ENCODE measurements at regions of chr11 and their contacts with region 1.

Region 1: GRCh38 chr11:108467091-108467823 is at the start of gene C11orf65:
- DNase-seq: peak; percentile 97
- ATAC-seq: peak; percentile 98
- H3K4me3 Mint-ChIP-seq: peak within 1 kb of the TSS; percentile 99
- H3K27ac Mint-ChIP-seq: peak within 1 kb of the TSS; percentile 98
- H3K4me1 Mint-ChIP-seq: peaks cover 12% of the 10 kb centered on the region
- H3K27me3 Mint-ChIP-seq: no peaks in the 10 kb centered on the region
- total RNA-seq, gene C11orf65: 3.4 to 3.6 TPM

Region 2: DNA sequence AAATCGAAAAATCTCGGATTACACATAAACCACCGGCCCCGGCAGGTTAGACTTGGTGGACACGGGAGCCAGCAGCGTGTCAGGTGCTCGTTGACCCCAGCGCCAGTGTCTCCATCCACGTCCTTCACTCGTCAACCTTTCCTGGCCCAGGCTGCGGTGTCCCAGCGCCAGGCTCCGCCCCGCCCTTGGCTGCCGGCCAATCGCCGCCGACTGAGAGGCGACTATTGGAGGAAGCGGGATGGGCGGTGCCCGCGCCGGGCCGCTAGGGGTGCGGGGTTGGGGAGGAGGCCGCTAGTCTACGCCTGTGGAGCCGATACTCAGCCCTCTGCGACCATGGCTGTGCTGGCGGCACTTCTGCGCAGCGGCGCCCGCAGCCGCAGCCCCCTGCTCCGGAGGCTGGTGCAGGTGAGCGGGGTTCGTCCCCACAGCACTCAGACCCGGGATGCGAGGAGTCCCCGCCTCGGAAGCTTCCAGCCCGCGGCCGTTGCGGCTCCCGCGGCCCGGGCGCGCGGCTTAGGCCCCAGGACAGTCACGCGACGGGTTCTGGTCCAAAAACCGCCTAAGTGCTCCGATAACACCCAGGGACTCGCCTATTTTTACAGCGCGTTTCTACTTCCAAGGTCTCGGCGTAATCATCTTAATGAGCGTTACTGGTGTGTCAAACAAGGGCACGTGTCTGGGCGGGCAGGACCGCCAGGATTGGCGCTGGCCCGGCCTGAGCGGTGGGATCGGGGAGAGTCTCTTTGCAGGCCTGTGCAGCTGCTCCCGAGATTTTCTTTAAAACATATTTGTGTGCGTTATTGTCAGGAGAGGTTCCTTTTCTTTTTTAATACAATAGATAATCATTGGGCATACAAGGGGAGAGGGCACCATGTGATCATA is 345.7 kb before region 1 on chr11 and contains the start of gene ACAT1:
- CTCF ChIA-PET with region 1: no interaction called
- POLR2A ChIA-PET with region 1: no interaction called
- intact Hi-C with region 1: loop called (anchors 1 to 2 kb)
- DNase-seq: peak; percentile 98
- ATAC-seq: peak; percentile 96
- H3K4me3 Mint-ChIP-seq: peak within 1 kb of the TSS; percentile 87
- H3K27ac Mint-ChIP-seq: peak within 1 kb of the TSS; percentile 85
- H3K4me1 Mint-ChIP-seq: peaks cover 40% of the 10 kb centered on the region
- H3K27me3 Mint-ChIP-seq: no peaks in the 10 kb centered on the region
- total RNA-seq, gene ACAT1: 59.0 to 67.0 TPM

Region 3: GRCh38 chr11:108237058-108237481 is 230.2 kb before region 1 on chr11:
- CTCF ChIA-PET with region 1: no interaction called
- POLR2A ChIA-PET with region 1: no interaction called
- intact Hi-C with region 1: loop called in 1 of 2 experiments (anchors 1 kb)
- DNase-seq: no peak
- ATAC-seq: peak; percentile 47
- H3K4me3 Mint-ChIP-seq: peak overlapping the region; percentile 57
- H3K27ac Mint-ChIP-seq: peak overlapping the region; percentile 83
- H3K4me1 Mint-ChIP-seq: peaks cover 77% of the 10 kb centered on the region
- H3K27me3 Mint-ChIP-seq: no peaks in the 10 kb centered on the region

Region 4: DNA sequence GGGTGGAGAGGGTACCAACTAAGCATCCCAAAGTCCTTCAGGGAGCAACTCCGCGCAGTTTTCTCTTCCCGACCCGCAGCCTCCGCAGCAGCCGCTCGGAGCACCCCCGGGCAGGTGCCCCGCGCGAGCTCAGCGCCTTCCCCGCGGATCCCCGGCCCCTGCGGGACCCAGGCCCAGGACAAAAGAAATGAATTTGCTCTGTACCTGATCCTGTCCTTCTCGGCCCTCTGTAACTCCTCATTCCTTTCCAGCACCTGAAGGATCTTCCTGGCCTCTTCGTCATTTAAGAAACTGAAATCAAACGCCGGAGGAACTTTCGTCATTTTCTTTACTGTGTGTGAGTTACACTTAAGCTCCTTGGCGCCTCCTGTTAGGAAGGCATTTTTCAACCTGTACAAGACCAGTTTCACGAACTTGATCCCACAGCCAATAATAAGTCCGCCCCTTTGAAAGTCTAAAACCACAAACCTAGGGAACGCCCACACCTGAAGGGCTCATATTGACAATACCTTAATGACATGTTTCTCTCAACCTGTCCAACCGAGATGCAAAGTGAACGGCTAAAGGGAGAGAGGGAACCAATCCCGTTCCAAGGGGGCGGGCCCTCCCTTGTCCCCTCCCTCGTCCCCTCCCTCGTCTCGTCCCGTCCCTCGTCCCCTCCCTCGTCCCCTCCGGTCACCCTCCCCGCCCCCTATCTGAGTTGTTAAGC is 126.1 kb after region 1 on chr11 and contains the start of gene EXPH5:
- CTCF ChIA-PET with region 1: no interaction called
- POLR2A ChIA-PET with region 1: no interaction called
- intact Hi-C with region 1: loop called (anchors 1 kb)
- DNase-seq: peak; percentile 92
- ATAC-seq: peak; percentile 99
- H3K4me3 Mint-ChIP-seq: peak within 1 kb of the TSS; percentile 94
- H3K27ac Mint-ChIP-seq: peak within 1 kb of the TSS; percentile 98
- H3K4me1 Mint-ChIP-seq: peaks cover 15% of the 10 kb centered on the region
- H3K27me3 Mint-ChIP-seq: peaks cover 21% of the 10 kb centered on the region
- total RNA-seq, gene EXPH5: 2.0 to 2.4 TPM

Region 5: GRCh38 chr11:108664730-108665525 is 197.7 kb after region 1 on chr11 and contains the start of gene DDX10:
- CTCF ChIA-PET with region 1: no interaction called
- POLR2A ChIA-PET with region 1: no interaction called
- intact Hi-C with region 1: loop called (anchors 1 kb)
- DNase-seq: peak; percentile 99
- ATAC-seq: peak; percentile 99
- H3K4me3 Mint-ChIP-seq: peak within 1 kb of the TSS; percentile 99
- H3K27ac Mint-ChIP-seq: peak within 1 kb of the TSS; percentile 91
- H3K4me1 Mint-ChIP-seq: peaks cover 37% of the 10 kb centered on the region
- H3K27me3 Mint-ChIP-seq: no peaks in the 10 kb centered on the region
- total RNA-seq, gene DDX10: 45.8 to 50.9 TPM

Region 6: GRCh38 chr11:108697872-108698473 is 230.7 kb after region 1 on chr11:
- CTCF ChIA-PET with region 1: no interaction called
- POLR2A ChIA-PET with region 1: no interaction called
- intact Hi-C with region 1: no loop called
- DNase-seq: peak; percentile 66
- ATAC-seq: peak; percentile 73
- H3K4me3 Mint-ChIP-seq: no peak overlapping the region
- H3K27ac Mint-ChIP-seq: no peak overlapping the region
- H3K4me1 Mint-ChIP-seq: no peaks in the 10 kb centered on the region
- H3K27me3 Mint-ChIP-seq: no peaks in the 10 kb centered on the region

Measured in activated CD4-positive, alpha-beta T cell treated with anti-CD3 and anti-CD28 coated beads for 36 hours (primary cell).